Cardiac septum (tissue), 1 donor: ENCODE measurements at regions of chr9 and their contacts with region 1.

Region 1: DNA sequence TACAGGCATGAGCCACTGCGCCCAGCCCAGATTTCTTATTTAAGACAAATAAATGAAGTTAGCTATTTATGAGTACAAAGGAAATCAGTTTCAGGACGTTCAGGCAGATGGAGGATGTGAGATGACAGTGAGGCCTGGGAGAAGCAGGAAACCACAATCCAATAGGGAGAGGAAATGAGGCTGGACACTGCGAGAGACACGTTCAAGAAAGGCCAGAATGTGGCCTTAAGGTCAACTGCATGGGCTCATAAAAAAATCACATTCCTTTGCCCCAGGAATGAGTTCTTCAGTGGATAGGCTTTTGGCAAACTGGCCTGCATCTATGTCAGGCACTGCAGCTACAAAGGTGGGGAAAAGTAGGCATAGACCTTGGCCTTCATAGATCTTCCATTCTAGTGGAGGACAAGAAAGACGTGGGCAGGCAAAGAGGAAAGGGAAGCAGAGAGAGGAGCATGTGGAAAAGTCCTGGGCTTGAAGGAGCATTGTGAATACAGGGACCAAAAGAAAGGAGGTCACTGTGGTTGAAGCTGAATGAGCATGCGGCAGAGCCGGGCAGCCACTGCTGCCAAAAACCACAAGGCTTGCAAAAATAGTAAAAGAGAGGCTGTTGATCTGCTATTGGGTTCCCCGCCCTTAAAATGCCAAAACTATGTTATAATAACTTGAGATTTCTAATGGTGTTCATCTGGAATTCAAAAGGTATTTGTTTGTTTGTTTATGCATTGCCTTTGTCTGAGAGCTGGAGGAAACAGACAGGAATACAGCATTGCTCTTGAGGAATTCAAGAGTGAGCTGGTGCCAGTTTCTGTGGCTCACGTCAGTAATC is 133.0 kb downstream of the GNA14 start:
- DNase-seq: no peak

Region 2: GRCh38 chr9:77601476-77602099 is 86.5 kb after region 1 on chr9:
- intact Hi-C with region 1: loop called (anchors 5 kb)
- DNase-seq: no peak

Region 3: DNA sequence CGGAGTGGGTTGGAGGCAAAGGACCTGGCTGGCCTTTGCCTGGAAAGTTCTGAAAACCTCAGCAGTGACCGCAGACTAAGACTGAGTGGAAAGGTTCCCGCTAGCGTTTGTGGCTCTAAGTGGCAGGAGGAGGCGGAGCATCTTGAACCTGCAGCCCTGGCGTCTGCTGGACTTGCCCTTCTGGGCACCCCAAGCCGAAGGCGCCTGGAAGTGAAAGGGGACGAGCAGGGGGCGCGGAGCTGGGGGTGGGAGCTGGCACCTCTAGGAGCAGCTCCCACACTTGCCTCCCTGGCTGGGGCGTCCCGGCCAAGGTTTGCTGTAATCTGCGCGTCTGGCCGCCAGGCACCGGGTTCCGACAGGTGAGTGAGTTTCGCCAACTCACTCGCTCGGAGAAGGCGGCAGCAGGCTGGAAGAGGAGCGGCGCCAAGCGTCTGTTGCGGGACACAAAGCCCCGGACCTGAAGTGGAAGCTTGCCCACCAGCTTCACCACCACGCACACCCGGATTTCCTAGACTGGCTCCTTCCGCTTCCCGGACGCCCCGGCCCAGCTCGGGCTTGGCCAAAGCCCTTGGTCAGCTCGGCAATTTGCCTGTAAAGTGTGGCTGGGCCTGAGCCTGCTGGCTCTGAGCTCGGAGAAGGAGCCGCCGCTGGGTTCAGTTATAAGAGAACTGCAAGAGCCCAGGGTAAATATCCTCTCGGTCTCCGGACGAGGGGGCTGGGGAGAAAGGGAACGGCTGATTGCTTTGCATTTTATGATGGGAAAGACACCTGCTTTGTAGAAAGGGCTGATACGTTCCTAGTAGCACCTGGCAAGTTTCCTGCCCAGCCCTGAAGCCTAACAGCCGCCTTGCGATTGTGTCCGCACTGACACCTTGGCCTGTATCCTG is 133.4 kb after region 1 on chr9 and contains the start of gene GNA14:
- intact Hi-C with region 1: loop called (anchors 10 kb)
- DNase-seq: peak; percentile 79
- total RNA-seq, gene GNA14: 2.7 TPM